Dorsolateral prefrontal cortex (tissue), 120 donors: ENCODE measurements at regions of chr1 and their contacts with region 1.

Region 1: DNA sequence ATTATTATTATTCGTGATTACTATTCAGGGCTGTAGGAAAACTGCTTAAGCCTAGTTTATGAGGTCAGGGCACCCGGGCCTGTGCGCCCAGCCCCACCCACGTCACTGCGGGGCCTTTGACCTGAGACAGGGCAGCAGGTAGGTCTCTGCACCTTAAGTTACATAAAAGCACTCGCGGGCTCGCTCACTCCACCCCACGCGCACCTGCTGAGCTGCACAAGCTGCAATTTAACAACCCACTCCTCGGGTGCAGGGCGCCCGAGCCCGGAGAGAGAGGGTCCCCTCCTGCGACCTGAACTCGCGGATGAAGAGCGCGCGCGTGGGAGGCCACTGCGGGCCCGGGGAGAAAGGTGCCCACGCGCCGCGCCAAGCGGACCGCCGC is 477 bp downstream of the ICMT start:
- DNase-seq: peak in 1 of 10 donors; percentile 21
- H3K4me3 ChIP-seq: peak overlapping the region; percentile 57 to 96 (median 79)
- H3K27ac ChIP-seq: peak overlapping the region in 29 of 59 donors; percentile 2 to 83 (median 53)
- H3K27me3 ChIP-seq: peaks cover 0 to 17% (median 0%) of the 10 kb centered on the region in 45 donors
- CTCF ChIP-seq: no peak

Region 2: GRCh38 chr1:5239911-5240310 is 995.4 kb before region 1 on chr1:
- intact Hi-C with region 1: no loop called
- DNase-seq: peak in 1 of 10 donors; percentile 59
- H3K4me3 ChIP-seq: no peak overlapping the region
- H3K27ac ChIP-seq: peak overlapping the region in 11 of 59 donors; percentile 8 to 67 (median 32)
- H3K27me3 ChIP-seq: no peaks in the 10 kb centered on the region
- CTCF ChIP-seq: no peak

Region 3: DNA sequence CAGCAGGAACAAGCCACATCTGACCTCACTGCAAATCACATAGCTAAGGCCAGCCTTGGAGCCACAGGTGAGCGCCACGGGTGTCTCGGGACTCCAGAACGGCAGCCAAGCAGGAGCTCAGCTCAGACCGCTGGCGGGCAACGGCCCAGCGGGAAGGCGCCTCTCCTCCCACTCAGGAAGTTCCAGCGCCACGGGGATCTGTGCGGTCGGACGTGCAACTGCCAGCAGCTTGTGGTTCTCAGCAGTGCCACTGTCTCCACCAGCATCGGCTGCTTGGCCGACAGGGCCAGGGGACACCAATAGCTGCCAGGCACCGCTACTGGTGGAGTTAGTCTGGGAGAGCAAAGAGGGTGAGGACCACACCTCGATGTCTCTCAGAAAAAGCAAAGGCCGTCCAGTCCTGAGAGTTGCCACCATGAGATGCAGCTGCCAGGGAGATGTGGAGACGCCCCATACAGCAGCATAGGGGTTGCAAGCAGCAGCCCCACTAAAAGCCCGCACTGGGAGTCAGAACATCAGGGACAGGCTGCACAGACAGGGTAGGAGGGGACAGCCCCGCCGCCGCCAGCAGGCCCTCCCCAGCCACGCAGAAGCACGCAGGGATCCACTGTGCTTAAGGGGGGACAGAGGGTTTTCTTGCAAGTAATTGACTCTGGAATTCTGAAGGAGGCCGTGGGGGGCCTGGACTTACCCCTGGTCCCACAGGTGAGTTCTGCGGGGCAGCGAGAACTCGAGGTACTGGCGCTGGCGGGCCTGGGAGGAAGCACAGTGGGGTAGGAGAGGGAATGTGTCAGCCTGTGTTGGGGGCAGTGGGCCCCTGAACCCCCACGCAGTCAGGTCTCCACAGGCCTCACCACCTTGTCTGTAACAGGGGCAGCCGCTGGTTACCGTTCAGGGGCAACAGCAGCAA is 326.6 kb before region 1 on chr1:
- intact Hi-C with region 1: no loop called
- DNase-seq: peak in 9 of 10 donors; percentile 26 to 78 (median 63)
- H3K4me3 ChIP-seq: no peak overlapping the region
- H3K27ac ChIP-seq: no peak overlapping the region
- H3K27me3 ChIP-seq: no peaks in the 10 kb centered on the region
- CTCF ChIP-seq: peak in 5 of 56 donors; percentile 8 to 25 (median 19)

Region 4: GRCh38 chr1:6059866-6060265 is 175.4 kb before region 1 on chr1:
- intact Hi-C with region 1: loop called in 1 of 2 experiments (anchors 5 kb)
- DNase-seq: no peak
- H3K4me3 ChIP-seq: no peak overlapping the region
- H3K27ac ChIP-seq: peak overlapping the region in 1 of 59 donors; percentile 62
- H3K27me3 ChIP-seq: no peaks in the 10 kb centered on the region
- CTCF ChIP-seq: no peak

Region 5: GRCh38 chr1:6199298-6200187 is 35.7 kb before region 1 on chr1 and contains the start of gene RPL22:
- intact Hi-C with region 1: loop called in 1 of 2 experiments (anchors 2 kb)
- DNase-seq: peak; percentile 95 to 99 (median 97)
- H3K4me3 ChIP-seq: peak within 1 kb of the TSS; percentile 73 to 100 (median 97)
- H3K27ac ChIP-seq: peak within 1 kb of the TSS in 57 of 59 donors; percentile 40 to 94 (median 82)
- H3K27me3 ChIP-seq: peaks cover 0 to 11% (median 0%) of the 10 kb centered on the region in 45 donors
- CTCF ChIP-seq: peak in 41 of 56 donors; percentile 8 to 65 (median 37)
- total RNA-seq, gene RPL22: 111 to 227 (median 176) TPM

Region 6: GRCh38 chr1:6205849-6206519 is 29.3 kb before region 1 on chr1 and contains the start of gene RNF207:
- intact Hi-C with region 1: loop called in 1 of 2 experiments (anchors 5 kb)
- DNase-seq: peak in 1 of 10 donors; percentile 65
- H3K4me3 ChIP-seq: peak within 1 kb of the TSS in 57 of 59 donors; percentile 10 to 63 (median 45)
- H3K27ac ChIP-seq: peak within 1 kb of the TSS in 11 of 59 donors; percentile 14 to 71 (median 42)
- H3K27me3 ChIP-seq: peaks cover 0 to 49% (median 19%) of the 10 kb centered on the region in 45 donors
- CTCF ChIP-seq: no peak
- total RNA-seq, gene RNF207: 7.4 to 42.1 (median 22.0) TPM

Region 7: DNA sequence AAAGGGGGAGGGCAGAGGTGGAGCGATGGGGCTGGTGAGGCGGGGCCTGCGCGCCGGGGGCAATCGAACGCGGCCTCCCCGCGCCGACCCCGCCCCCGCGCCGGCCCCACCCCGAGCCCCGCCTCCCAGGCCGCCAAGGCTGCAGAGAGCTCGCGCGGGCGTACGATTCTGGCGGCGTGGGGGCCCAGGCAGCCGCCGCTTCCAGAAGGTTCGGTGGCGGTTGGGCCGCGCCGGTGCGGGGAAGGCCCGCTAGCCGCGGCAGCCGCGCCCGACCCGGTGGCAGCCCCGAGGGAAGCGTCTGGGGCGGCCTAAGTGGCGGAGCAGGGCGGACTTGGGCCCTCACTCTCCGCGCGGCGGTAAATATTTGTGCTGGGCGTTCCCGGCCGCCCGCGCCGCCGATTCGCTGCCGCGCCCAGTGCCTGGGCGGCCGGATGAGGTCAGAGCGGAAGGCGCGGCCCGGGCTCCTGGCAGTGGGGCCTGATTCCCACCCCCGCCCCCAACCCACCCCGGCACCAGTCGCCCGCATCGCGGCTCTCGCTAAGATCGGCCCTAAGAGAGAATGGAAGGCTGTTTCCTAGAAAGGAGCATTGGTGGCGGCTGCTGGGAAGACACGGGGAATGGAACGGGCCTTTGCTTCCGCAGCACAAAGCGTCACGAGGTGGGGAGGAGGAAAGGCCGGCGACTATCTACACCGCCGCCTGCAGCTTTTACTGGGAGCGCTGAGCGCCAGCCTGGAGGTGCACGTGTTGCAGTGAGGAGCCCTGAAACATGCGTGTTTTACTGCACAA is 158.3 kb after region 1 on chr1 and contains the start of gene ACOT7:
- intact Hi-C with region 1: loop called in 1 of 2 experiments (anchors 5 kb)
- DNase-seq: peak; percentile 80 to 93 (median 88)
- H3K4me3 ChIP-seq: peak within 1 kb of the TSS; percentile 49 to 82 (median 70)
- H3K27ac ChIP-seq: peak within 1 kb of the TSS; percentile 94 to 100 (median 99)
- H3K27me3 ChIP-seq: no peaks in the 10 kb centered on the region
- CTCF ChIP-seq: peak in 49 of 56 donors; percentile 7 to 58 (median 30)
- total RNA-seq, gene ACOT7: 67.4 to 236 (median 171) TPM

Region 8: GRCh38 chr1:6464514-6464836 is 229.2 kb after region 1 on chr1:
- intact Hi-C with region 1: no loop called
- DNase-seq: peak in 3 of 10 donors; percentile 28 to 73 (median 39)
- H3K4me3 ChIP-seq: no peak overlapping the region
- H3K27ac ChIP-seq: no peak overlapping the region
- H3K27me3 ChIP-seq: peaks cover 0 to 31% (median 0%) of the 10 kb centered on the region in 45 donors
- CTCF ChIP-seq: no peak